Heart right ventricle (tissue), 16 donors: ENCODE measurements at regions of chr16 and their contacts with region 1.

Region 1: DNA sequence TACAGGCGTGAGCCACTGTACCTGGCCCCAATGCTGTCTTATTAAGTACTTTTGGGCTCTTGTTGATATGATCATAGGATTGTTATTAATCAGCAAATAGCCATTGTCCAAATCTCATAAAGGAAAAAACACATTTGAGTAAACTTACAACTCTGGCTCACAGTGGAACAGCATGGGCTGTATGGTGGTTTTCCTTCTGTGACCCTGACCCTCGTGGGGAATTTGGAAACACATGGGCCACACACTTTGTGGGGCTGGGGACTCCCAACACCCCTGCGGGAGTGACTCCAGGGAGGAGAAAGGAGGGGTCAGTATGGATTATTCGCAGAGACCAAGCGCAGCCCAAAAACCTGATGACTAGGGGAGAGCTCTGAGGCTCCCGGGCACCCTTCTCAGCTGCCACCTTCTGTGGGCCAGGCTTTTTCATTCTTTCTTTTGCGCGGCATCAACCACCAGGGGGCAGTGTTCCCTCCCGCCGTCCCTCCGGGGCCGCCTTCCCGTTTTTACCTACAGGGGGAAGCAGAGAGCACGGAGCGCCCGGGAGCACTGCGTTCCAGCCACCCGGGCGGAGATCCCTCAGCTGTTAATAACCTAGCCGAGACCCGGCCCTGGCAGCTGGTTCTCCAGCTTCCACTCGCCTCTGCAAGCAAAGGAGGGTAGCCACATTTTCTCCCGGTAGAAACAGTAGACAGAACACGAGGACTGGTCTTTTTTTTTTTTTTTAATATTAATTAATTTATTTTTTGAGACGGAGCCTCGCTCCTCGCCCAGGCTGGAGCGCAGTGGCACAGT is 9.7 kb downstream of the TSNAXIP1 start:
- DNase-seq: peak; percentile 83 to 86
- ATAC-seq: peak; percentile 87 to 97 (median 95)
- H3K4me3 ChIP-seq: no peak overlapping the region
- H3K27ac ChIP-seq: peak overlapping the region in 1 of 10 donors; percentile 55
- H3K4me1 ChIP-seq: peaks cover 0 to 7% (median 0%) of the 10 kb centered on the region in 9 donors
- H3K27me3 ChIP-seq: no peaks in the 10 kb centered on the region
- CTCF ChIP-seq: peak in 8 of 9 donors; percentile 100

Region 2: GRCh38 chr16:67104061-67104460 is 712.4 kb before region 1 on chr16:
- intact Hi-C with region 1: no loop called
- DNase-seq: peak in 1 of 2 donors; percentile 29
- ATAC-seq: peak in 7 of 8 donors; percentile 39 to 76 (median 65)
- H3K4me3 ChIP-seq: no peak overlapping the region
- H3K27ac ChIP-seq: no peak overlapping the region
- H3K4me1 ChIP-seq: peaks cover 0 to 30% (median 8%) of the 10 kb centered on the region in 9 donors
- H3K27me3 ChIP-seq: no peaks in the 10 kb centered on the region
- CTCF ChIP-seq: peak in 8 of 9 donors; percentile 10 to 54 (median 35)

Region 3: DNA sequence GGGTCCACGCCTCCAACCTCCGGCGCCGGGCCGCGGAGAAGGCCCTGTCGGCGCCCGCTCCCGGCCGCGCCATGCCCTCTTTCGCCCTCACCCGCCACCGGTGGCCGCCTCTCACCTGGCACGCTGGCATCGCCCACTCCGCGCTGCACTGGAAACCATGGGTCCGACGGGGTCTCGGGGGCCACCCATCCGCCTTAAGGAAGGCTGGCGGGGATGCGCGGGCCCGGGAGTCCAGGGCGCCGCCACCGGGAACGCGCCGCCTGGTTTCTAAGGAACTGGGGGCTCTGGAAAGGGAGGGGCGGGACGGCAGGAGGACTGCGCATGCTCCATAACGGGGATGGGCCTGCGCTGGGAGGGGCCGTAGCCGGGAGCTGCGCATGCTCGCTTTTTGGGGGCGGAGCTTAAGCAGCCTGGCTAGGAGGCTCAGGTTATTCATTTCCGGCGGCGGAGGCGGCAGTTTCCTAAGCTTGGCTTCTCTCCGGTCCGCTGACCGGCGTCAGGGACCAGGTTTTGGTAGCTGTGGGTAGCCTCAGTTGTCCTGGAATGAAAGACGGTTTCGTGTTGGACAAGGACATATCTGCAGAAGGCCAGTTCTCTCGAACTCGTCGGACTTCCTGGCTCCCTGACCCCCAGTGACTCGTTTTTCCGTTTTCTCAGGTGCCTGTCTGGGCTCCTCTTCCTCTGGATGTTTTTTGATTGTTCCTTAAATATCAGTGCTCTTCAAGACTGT is 97.2 kb before region 1 on chr16 and contains the start of gene GFOD2:
- intact Hi-C with region 1: no loop called
- DNase-seq: peak; percentile 98 to 99
- ATAC-seq: peak; percentile 99 to 100 (median 99)
- H3K4me3 ChIP-seq: peak within 1 kb of the TSS; percentile 81 to 100 (median 93)
- H3K27ac ChIP-seq: peak within 1 kb of the TSS; percentile 76 to 97 (median 92)
- H3K4me1 ChIP-seq: peaks cover 0 to 34% (median 24%) of the 10 kb centered on the region in 9 donors
- H3K27me3 ChIP-seq: no peaks in the 10 kb centered on the region
- CTCF ChIP-seq: peak in 1 of 9 donors; percentile 14
- total RNA-seq, gene GFOD2: 6.0 to 10.7 (median 8.2) TPM

Region 4: GRCh38 chr16:67748834-67749233 is 67.6 kb before region 1 on chr16:
- intact Hi-C with region 1: no loop called
- DNase-seq: no peak
- ATAC-seq: peak in 1 of 8 donors; percentile 46
- H3K4me3 ChIP-seq: no peak overlapping the region
- H3K27ac ChIP-seq: no peak overlapping the region
- H3K4me1 ChIP-seq: no peaks in the 10 kb centered on the region
- H3K27me3 ChIP-seq: no peaks in the 10 kb centered on the region
- CTCF ChIP-seq: no peak

Region 5: DNA sequence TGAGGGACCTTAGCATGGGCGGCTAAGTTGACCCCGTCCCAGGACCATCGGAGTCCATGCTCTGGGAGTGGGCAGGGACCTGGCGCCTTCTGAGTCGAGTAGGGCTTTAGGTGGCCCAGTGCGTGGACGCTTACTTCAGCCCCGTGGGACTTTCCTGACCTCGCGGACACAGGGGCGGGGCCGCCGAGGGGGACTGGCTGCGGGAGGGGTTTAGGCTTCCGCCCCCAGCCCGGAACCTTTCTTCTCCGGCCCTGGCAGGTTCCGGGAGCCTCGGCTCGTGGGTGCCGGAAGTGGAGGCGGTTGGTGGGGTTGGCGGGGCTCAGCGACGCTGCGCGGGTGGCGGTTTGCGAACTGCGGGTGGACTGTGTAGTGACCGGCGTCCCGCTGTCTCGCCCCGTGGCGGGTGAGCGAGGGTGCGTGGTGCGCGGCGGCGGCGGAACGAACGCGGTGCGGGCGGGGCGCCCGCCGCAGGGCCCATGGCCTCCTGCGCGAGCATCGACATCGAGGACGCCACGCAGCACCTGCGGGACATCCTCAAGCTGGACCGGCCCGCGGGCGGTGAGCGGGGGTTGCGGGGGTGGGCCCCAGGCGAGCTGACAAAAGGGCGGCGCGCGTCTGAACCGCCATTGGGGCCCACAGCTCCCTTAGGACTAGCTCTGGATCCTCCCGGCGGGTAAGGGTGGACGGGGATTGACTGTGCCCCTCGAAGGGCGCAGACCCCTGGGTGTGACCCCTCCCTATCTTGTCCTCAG is 56.5 kb after region 1 on chr16 and contains the start of gene EDC4:
- intact Hi-C with region 1: loop called in 1 of 10 experiments (anchors 2 kb)
- DNase-seq: peak; percentile 89 to 90
- ATAC-seq: peak; percentile 91 to 95 (median 93)
- H3K4me3 ChIP-seq: peak within 1 kb of the TSS; percentile 79 to 100 (median 97)
- H3K27ac ChIP-seq: peak within 1 kb of the TSS; percentile 43 to 93 (median 90)
- H3K4me1 ChIP-seq: peaks cover 17 to 41% (median 31%) of the 10 kb centered on the region in 9 donors
- H3K27me3 ChIP-seq: no peaks in the 10 kb centered on the region
- CTCF ChIP-seq: peak in 1 of 9 donors; percentile 9
- total RNA-seq, gene EDC4: 25.8 to 41.6 (median 31.3) TPM

Region 6: DNA sequence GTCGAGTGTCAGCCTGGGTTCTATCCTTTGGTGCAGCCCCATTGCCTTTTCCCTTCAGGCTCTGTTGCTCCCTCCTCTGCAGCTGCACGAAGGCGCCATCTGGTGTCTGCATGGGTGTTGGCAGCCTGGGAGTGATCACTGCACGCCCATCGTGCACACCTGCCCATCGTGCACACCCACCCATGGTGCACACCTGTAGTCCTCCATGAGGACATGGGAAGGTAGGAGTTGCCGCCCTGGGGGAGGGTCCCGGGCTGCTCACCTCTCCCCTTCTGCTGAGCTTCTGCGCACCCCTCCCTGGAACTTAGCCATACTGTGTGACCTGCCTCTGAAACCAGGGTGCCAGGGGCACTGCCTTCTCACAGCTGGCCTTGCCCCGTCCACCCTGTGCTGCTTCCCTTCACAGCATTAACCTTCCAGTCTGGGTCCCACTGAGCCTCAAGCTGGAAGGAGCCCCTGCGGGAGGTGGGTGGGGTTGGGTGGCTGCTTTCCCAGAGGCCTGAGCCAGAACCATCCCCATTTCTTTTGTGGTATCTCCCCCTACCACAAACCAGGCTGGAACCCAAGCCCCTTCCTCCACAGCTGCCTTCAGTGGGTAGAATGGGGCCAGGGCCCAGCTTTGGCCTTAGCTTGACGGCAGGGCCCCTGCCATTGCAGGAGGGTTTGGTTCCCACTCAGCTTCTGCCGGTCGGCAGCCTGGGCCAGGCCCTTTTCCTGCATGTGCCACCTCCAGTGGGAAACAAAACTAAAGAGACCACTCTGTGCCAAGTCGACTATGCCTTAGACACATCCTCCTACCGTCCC is 112.3 kb after region 1 on chr16:
- intact Hi-C with region 1: loop called in 7 of 10 experiments (anchors 1 to 5 kb)
- DNase-seq: peak; percentile 67 to 78
- ATAC-seq: peak; percentile 51 to 77 (median 67)
- H3K4me3 ChIP-seq: no peak overlapping the region
- H3K27ac ChIP-seq: peak overlapping the region in 1 of 10 donors; percentile 4
- H3K4me1 ChIP-seq: peaks cover 0 to 39% (median 20%) of the 10 kb centered on the region in 9 donors
- H3K27me3 ChIP-seq: no peaks in the 10 kb centered on the region
- CTCF ChIP-seq: peak; percentile 69 to 91 (median 85)

Region 7: DNA sequence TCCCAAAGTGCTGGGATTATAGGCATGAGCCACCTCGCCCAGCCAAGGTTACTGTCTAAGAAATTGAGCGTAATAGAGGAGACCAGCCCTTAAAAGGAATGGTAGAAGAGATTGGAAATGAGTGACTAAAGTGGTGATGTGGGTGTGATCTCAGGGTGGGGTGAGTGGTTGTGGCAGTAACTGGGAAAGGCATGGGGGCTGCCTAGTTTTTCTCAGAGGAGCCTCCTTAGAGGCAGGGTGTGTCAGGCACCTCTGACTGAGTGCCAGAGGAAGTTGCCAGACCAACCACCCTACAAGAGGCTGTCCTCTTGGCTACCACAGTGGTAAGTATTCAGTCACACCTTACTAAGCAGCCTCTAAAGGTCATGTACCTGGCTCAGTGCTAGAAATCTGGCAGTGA is 215.5 kb after region 1 on chr16:
- intact Hi-C with region 1: loop called in 4 of 10 experiments (anchors 5 to 10 kb)
- DNase-seq: no peak
- ATAC-seq: no peak
- H3K4me3 ChIP-seq: no peak overlapping the region
- H3K27ac ChIP-seq: no peak overlapping the region
- H3K4me1 ChIP-seq: peaks cover 0 to 5% (median 0%) of the 10 kb centered on the region in 9 donors
- H3K27me3 ChIP-seq: no peaks in the 10 kb centered on the region
- CTCF ChIP-seq: no peak

Region 8: DNA sequence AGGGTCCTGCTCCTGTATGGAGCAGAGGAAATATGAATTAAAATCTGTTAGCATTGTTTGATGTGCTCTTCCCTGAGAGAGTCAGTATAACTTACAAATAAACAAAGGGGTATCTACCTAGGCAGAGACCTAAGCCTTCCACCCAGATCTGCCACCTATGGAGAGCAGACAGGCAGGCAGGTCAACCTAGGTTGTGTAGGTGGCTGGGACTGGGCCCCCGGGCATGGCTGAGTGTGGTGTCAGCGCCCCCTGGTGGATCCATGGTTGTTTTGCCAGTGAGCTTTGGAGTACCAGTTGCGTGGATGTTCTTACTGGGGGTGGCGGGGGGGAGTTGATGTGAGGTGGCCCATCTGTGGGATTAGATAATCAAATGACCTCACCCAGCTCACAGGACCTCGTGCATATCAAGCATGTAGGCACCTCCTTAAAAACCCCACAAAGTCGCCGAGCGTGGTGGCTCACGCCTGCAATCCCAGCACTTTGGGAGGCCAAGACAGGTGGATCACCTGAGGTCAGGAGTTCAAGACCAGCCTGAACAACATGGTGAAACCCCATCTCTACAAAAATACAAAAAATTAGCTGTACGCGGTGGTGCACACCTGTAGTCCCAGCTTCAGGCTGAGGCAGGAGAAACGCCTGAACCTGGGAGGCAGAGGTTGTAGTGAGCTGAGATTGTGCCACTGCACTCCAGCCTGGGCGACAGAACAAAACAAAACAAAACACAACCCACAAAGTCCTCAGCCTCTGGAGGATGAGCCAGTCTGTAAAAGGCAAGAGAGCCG is 224.3 kb after region 1 on chr16:
- intact Hi-C with region 1: loop called (anchors 1 to 10 kb)
- DNase-seq: peak; percentile 83 to 84
- ATAC-seq: peak; percentile 89 to 96 (median 94)
- H3K4me3 ChIP-seq: no peak overlapping the region
- H3K27ac ChIP-seq: peak overlapping the region in 1 of 10 donors; percentile 69
- H3K4me1 ChIP-seq: peaks cover 0 to 45% (median 0%) of the 10 kb centered on the region in 9 donors
- H3K27me3 ChIP-seq: no peaks in the 10 kb centered on the region
- CTCF ChIP-seq: peak; percentile 73 to 88 (median 83)

Region 9: DNA sequence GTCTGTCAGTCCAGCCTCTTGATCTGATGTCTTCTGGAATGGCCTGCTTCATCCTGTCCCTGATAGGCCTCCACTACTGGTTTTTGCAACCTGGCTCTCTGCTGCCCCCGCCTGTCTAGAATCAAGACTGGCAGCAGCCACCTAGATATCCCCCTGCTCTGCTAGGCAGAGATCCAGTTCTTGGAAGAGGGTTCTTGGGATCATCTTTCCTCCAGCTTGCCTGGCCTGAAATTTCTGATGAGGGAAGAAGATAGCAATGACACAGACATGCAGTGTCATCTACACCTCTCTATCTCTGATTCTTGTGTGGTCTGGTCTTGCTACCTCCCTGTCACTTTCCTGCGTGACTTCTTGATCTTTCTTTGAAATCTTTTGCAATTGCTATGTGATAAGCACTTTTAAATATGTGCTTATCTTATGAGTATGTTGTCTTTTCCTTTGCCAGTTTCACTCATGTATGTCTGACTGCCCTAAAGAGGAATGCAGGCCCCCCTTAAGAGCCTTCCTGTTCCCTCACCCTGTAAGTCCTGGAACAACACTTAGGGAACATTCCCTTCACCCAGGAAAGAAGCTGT is 248.4 kb after region 1 on chr16:
- intact Hi-C with region 1: loop called in 1 of 10 experiments (anchors 10 kb)
- DNase-seq: peak; percentile 66 to 77
- ATAC-seq: peak; percentile 75 to 85 (median 80)
- H3K4me3 ChIP-seq: no peak overlapping the region
- H3K27ac ChIP-seq: peak overlapping the region in 6 of 10 donors; percentile 12 to 75 (median 30)
- H3K4me1 ChIP-seq: peaks cover 5 to 62% (median 26%) of the 10 kb centered on the region in 9 donors
- H3K27me3 ChIP-seq: no peaks in the 10 kb centered on the region
- CTCF ChIP-seq: peak; percentile 64 to 89 (median 81)

Region 10: GRCh38 chr16:68229431-68230198 is 413.2 kb after region 1 on chr16:
- intact Hi-C with region 1: loop called in 3 of 10 experiments (anchors 5 to 10 kb)
- DNase-seq: no peak
- ATAC-seq: peak; percentile 11 to 57 (median 38)
- H3K4me3 ChIP-seq: no peak overlapping the region
- H3K27ac ChIP-seq: peak overlapping the region in 1 of 10 donors; percentile 43
- H3K4me1 ChIP-seq: peaks cover 3 to 33% (median 23%) of the 10 kb centered on the region in 9 donors
- H3K27me3 ChIP-seq: no peaks in the 10 kb centered on the region
- CTCF ChIP-seq: peak; percentile 85 to 94 (median 91)

Region 11: GRCh38 chr16:69089091-69089910 is 1272.9 kb after region 1 on chr16:
- intact Hi-C with region 1: no loop called
- DNase-seq: no peak
- ATAC-seq: peak in 6 of 8 donors; percentile 39 to 61 (median 49)
- H3K4me3 ChIP-seq: no peak overlapping the region
- H3K27ac ChIP-seq: peak overlapping the region in 5 of 10 donors; percentile 14 to 59 (median 39)
- H3K4me1 ChIP-seq: peaks cover 0 to 33% (median 15%) of the 10 kb centered on the region in 9 donors
- H3K27me3 ChIP-seq: no peaks in the 10 kb centered on the region
- CTCF ChIP-seq: no peak